Left ventricle myocardium inferior (tissue), 1 donor: ENCODE measurements at regions of chr15 and their contacts with region 1.

Region 1: GRCh38 chr15:72800833-72801480 is 17.4 kb upstream of the ADPGK start:
- DNase-seq: no peak
- H3K4me3 ChIP-seq: no peak overlapping the region
- H3K27ac ChIP-seq: no peak overlapping the region
- H3K4me1 ChIP-seq: peaks cover 13% of the 10 kb centered on the region
- H3K27me3 ChIP-seq: peaks cover 84% of the 10 kb centered on the region
- CTCF ChIP-seq: no peak

Region 2: GRCh38 chr15:73081321-73081958 is 280.5 kb after region 1 on chr15:
- intact Hi-C with region 1: loop called (anchors 5 kb)
- DNase-seq: no peak
- H3K4me3 ChIP-seq: no peak overlapping the region
- H3K27ac ChIP-seq: no peak overlapping the region
- H3K4me1 ChIP-seq: peaks cover 17% of the 10 kb centered on the region
- H3K27me3 ChIP-seq: peaks cover 16% of the 10 kb centered on the region
- CTCF ChIP-seq: peak; percentile 78